Cardiac septum (tissue), 1 donor: ENCODE measurements at regions of chr10 and their contacts with region 1.

Region 1: GRCh38 chr10:132836832-132837540 is 51.0 kb upstream of the NKX6-2 start:
- DNase-seq: peak; percentile 76

Region 2: DNA sequence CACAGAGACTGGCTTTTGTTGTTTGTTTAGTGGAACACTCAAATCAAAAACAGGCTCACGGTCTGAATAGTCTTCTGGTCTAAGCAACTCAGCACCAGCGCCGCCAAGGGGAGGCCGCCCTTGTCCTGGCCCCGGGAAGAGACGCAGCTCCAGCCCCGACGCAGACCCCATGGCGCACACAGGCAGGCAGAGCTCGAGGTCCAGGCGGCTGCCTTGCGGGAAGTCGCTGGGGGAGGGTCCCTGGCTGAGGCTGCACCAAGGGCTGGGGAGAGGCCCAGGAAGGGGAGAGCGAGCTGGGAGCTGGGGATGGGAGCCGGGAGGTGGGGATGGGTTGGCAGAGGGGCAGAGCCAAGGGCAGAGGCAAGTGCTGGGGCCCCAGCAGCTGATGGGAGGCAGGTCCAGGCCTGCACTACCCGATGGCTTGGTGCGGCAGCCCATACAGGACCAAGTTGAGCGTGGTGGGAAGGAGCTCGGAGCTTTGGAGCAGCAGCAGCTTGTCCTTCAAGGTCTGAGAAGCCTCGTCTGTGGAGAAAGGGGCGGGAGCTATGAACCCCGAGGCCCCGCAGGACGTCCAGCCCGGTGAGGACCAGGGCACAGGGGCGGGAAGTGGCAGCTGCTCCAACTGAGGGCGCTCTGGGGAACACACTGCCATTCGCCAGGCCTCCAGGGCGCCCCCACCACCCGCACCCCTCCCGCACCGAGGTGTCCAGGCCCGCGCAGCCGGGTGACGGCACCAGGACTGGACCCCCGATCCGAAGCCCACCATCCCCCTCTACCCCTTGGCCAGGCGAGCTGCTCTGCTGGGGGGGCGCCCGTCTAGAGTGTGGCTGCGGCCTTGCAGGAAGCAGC is 28.4 kb before region 1 on chr10:
- intact Hi-C with region 1: no loop called
- DNase-seq: peak; percentile 57

Region 3: DNA sequence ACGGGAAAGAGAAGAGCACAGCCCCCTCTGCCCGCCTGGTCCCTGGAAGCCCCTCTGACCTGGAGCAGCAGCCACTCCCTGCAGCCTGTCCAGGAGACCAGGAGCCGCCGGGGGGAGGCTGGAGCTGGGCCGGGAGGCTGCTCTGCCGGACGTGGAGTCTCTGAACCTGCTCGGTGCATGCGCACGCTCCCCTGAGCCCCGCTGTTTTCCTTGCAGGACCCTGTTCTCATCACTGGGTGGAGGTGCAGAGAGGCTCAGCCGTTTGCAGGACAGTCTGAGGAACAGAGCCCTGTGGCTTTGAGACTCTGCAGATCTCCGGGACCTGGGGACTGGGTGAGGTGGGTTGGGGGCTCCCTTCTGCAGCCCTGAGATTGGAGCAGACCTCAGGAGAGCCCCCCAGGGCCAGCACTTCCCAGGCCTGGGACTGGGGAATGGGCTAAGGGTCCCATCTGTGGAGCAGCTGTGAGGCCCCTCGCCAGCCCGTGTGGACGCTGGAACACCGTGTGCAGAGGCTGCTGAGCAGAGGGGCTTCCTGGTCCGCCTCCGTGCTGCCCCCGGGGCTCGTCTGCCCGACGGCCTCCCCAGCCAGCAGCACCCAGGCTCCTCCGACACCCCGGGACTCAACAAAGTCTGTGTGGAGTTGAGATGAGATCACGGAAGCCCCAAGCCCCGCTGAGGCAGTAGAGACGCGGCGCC is 202.3 kb after region 1 on chr10:
- intact Hi-C with region 1: no loop called
- DNase-seq: no peak

Region 4: DNA sequence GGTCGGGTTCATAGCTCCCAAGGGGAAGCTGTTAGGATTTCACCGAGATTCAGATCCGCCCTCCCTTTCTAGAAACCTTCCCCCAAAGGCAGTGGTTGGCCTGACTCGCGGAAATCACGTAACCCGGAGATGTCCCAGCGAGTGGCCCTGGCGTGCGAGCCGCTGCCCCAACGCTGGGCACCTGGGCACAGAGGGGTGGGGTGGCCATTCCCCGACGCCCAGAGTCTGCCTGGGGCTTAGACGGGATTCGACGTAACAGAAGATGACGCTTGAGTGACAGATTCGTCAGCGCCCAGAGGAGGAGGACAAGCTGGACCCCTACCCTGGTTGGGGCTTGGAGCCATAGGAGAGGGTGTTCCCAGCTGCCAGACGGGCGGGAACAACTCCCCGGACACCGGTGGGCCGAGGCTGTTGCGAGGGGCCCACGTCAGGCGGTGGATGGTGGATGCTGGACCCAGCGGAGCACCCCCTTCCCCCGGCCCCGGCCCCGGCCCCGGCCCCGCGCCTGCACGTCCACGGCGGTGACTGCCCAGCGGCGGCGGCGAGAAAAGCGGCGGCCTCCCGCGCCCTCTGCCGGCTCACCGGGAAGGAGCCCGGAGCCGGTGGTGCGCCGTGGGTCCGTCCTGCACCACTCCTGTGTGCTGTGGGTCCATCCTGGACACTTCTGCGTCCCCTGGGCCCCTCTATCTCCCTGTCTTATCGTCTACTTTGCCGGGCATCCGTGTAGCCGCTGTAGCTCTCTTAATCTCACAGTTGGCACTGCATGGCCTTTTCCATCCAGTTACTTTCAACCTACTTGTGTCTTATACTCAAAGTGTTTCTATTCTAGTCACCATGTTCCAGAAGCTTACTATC is 287.6 kb after region 1 on chr10:
- intact Hi-C with region 1: loop called (anchors 2 kb)
- DNase-seq: peak; percentile 76

Region 5: DNA sequence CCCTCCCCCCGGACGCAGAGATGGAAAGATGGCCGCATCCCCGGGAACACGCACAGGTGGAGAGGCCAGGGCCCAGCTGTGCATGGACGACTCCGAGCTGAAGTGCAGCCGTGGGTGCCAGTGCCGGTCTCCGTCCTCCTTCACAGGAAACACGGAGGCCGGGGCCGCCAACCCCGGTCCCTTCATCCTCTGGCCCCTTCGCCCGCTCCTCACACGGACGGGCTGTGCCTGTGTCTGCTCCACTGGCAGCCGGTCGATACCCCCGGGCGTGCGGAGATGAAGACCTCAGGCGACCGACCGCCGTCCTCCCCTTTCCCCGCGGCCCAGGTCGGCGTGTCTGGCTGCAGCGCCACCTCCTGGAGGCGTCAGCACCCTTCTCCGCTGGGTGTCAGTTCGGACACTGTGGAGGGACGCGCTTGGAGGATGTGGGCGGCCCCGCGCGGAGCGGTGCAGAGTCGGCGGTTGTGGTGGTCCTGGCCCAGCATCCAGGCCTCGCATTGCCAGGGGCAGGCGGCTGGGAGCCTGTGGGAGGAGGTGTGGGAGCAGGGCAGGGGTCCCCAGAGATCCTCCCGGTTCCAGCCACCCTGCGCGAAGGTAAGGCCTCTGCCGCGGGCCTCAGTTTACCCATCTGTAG is 481.6 kb after region 1 on chr10:
- intact Hi-C with region 1: loop called (anchors 10 kb)
- DNase-seq: no peak